HCT116 (cell line): ENCODE measurements at regions of chr20 and their contacts with region 1.

Region 1: DNA sequence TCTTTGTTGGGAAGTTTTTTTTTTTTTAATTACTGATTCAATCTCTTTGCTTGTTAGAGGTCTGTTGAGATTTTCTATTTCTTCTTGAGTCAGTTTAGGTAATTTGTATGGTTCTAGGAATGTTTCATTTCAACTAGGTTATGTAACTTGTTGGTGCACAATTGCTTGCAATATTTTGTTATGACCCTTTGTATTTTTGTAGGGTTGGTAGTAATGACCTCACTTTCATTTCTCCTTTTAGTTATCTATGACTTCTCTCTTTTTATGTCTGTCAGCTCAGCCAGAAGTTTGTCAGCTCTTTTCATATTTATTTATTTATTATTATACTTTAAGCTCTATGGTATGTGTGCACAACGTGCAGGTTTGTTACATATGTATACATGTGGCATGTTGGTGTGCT is 51.1 kb upstream of the SLC24A3 start:
- DNase-seq: no peak
- ATAC-seq: no peak
- H3K4me3 ChIP-seq: no peak overlapping the region
- H3K27ac ChIP-seq: no peak overlapping the region
- H3K4me1 ChIP-seq: no peaks in the 10 kb centered on the region
- H3K27me3 ChIP-seq: no peaks in the 10 kb centered on the region
- CTCF ChIP-seq: no peak
- POLR2A ChIP-seq: no peak
- RAD21 ChIP-seq: no peak

Region 2: GRCh38 chr20:19212821-19213502 is 51.6 kb after region 1 on chr20:
- CTCF ChIA-PET with region 1: no interaction called
- POLR2A ChIA-PET with region 1: no interaction called
- RAD21 ChIA-PET with region 1: no interaction called
- intact Hi-C with region 1: loop called (anchors 10 kb)
- DNase-seq: no peak
- ATAC-seq: no peak
- H3K4me3 ChIP-seq: no peak overlapping the region
- H3K27ac ChIP-seq: no peak overlapping the region
- H3K4me1 ChIP-seq: no peaks in the 10 kb centered on the region
- H3K27me3 ChIP-seq: no peaks in the 10 kb centered on the region
- CTCF ChIP-seq: no peak
- POLR2A ChIP-seq: no peak
- RAD21 ChIP-seq: no peak

Region 3: GRCh38 chr20:19275630-19276072 is 114.3 kb after region 1 on chr20:
- CTCF ChIA-PET with region 1: no interaction called
- POLR2A ChIA-PET with region 1: no interaction called
- RAD21 ChIA-PET with region 1: no interaction called
- intact Hi-C with region 1: no loop called
- DNase-seq: no peak
- ATAC-seq: no peak
- H3K4me3 ChIP-seq: no peak overlapping the region
- H3K27ac ChIP-seq: no peak overlapping the region
- H3K4me1 ChIP-seq: no peaks in the 10 kb centered on the region
- H3K27me3 ChIP-seq: no peaks in the 10 kb centered on the region
- CTCF ChIP-seq: no peak
- POLR2A ChIP-seq: no peak
- RAD21 ChIP-seq: no peak

Region 4: DNA sequence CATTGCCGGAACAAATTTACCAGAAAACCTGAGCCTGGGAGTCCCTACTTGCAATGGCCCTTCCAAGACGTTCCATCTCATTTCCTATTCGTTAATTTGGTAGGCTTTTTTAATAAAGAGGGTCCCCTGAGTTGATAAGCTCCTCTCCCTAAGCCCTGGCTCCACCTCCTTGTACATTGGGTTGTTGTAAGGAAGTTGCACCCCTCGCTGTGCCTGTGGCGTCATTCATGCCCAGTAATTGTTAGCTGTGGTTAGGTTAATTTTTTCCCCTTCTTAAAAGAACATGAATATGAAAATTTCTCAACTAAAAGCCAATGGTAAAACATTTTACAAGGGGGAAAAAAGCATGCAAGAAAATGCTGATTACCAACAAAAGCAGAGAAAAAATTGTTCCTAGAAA is 143.1 kb after region 1 on chr20:
- CTCF ChIA-PET with region 1: no interaction called
- POLR2A ChIA-PET with region 1: no interaction called
- RAD21 ChIA-PET with region 1: no interaction called
- intact Hi-C with region 1: no loop called
- DNase-seq: no peak
- ATAC-seq: no peak
- H3K4me3 ChIP-seq: no peak overlapping the region
- H3K27ac ChIP-seq: no peak overlapping the region
- H3K4me1 ChIP-seq: no peaks in the 10 kb centered on the region
- H3K27me3 ChIP-seq: no peaks in the 10 kb centered on the region
- CTCF ChIP-seq: no peak
- POLR2A ChIP-seq: no peak
- RAD21 ChIP-seq: no peak